ENCODE measurements at regions of chr14 and their contacts with region 1.

Region 1: DNA sequence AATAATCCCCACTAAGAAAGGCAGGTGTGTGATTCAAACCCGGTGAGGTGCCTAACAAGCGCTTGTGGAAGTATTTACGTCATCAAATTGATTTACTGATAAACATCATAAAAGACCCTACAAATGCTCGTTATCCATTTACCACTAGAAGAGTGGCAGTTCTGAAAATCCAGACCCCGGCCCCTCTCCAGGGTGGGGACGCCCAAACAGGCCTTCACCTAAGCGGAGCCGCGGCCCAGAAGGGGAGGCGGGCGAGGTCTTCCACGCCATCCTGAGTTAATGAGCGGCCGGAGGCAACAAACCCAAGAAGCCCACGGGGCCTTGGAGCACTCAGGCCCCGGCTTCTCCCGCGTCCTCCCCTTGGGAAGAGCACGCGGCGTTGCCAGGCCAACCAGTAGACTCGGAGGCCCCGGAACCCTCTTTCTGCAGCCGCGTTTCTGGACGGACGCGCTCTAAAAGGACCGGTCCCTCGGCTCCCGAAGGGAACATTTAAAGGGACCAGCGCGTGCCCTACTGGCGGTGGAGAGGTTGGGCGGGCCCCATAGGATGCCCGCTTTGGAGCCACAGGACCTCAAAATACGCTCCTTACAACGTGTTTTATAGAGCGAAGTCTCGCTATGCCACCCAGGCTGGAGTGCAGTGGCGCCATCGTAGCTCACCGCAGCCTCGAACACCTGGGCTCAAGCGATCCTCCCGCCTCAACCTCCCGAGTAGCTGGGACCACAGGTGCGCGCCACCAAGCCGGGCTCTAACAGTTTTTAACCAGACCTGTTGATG is 3.5 kb downstream of the PTPN21 start:
- DNase-seq: peak; percentile 77 to 93 (median 83)
- ATAC-seq: peak; percentile 82 to 92 (median 86)
- H3K4me3 ChIP-seq: peak overlapping the region; percentile 44 to 72 (median 51)
- H3K27ac ChIP-seq: peak overlapping the region; percentile 11 to 71 (median 49)
- H3K4me1 ChIP-seq: peaks cover 8 to 33% (median 16%) of the 10 kb centered on the region in 3 donors
- H3K27me3 ChIP-seq: no peaks in the 10 kb centered on the region
- CTCF ChIP-seq: peak in 2 of 4 donors; percentile 11 to 14

Region 2: GRCh38 chr14:88143810-88144209 is 407.5 kb before region 1 on chr14:
- intact Hi-C with region 1: no loop called
- DNase-seq: no peak
- ATAC-seq: no peak
- H3K4me3 ChIP-seq: no peak overlapping the region
- H3K27ac ChIP-seq: no peak overlapping the region
- H3K4me1 ChIP-seq: no peaks in the 10 kb centered on the region
- H3K27me3 ChIP-seq: no peaks in the 10 kb centered on the region
- CTCF ChIP-seq: no peak

Region 3: GRCh38 chr14:88189417-88190191 is 361.7 kb before region 1 on chr14:
- intact Hi-C with region 1: loop called in 1 of 3 experiments (anchors 10 kb)
- DNase-seq: peak in 4 of 6 donors; percentile 66 to 93 (median 88)
- ATAC-seq: peak; percentile 97 to 99 (median 98)
- H3K4me3 ChIP-seq: peak overlapping the region in 3 of 4 donors; percentile 15 to 45 (median 32)
- H3K27ac ChIP-seq: peak overlapping the region in 3 of 4 donors; percentile 48 to 68 (median 60)
- H3K4me1 ChIP-seq: peaks cover 5 to 12% (median 11%) of the 10 kb centered on the region in 3 donors
- H3K27me3 ChIP-seq: no peaks in the 10 kb centered on the region
- CTCF ChIP-seq: peak; percentile 16 to 48 (median 34)

Region 4: DNA sequence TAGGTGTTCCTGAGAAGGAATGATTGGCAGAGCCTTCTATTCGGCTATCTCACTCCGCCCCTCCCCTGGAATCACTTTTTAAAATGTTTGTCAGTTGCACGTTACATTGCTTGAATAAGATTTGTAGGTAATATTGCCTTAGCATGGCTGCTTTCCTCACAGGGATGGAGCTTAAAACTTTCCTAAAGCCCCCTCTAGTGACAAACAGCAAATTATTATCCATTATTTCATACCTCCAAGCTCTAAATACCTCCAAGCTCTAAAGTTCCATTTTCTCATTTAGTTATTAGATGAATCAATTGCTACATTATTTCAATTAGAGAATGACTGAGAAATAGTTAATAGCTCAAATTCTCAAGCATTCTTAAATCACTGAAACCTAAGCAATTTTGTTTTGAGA is 170.9 kb before region 1 on chr14:
- intact Hi-C with region 1: no loop called
- DNase-seq: no peak
- ATAC-seq: peak in 2 of 4 donors; percentile 13 to 51
- H3K4me3 ChIP-seq: no peak overlapping the region
- H3K27ac ChIP-seq: no peak overlapping the region
- H3K4me1 ChIP-seq: no peaks in the 10 kb centered on the region
- H3K27me3 ChIP-seq: no peaks in the 10 kb centered on the region
- CTCF ChIP-seq: no peak

Region 5: GRCh38 chr14:88492272-88493089 is 58.8 kb before region 1 on chr14:
- intact Hi-C with region 1: loop called in 2 of 3 experiments (anchors 5 to 10 kb)
- DNase-seq: peak in 4 of 6 donors; percentile 50 to 82 (median 66)
- ATAC-seq: peak; percentile 90 to 99 (median 98)
- H3K4me3 ChIP-seq: no peak overlapping the region
- H3K27ac ChIP-seq: no peak overlapping the region
- H3K4me1 ChIP-seq: no peaks in the 10 kb centered on the region
- H3K27me3 ChIP-seq: no peaks in the 10 kb centered on the region
- CTCF ChIP-seq: peak; percentile 83 to 97 (median 92)

Region 6: DNA sequence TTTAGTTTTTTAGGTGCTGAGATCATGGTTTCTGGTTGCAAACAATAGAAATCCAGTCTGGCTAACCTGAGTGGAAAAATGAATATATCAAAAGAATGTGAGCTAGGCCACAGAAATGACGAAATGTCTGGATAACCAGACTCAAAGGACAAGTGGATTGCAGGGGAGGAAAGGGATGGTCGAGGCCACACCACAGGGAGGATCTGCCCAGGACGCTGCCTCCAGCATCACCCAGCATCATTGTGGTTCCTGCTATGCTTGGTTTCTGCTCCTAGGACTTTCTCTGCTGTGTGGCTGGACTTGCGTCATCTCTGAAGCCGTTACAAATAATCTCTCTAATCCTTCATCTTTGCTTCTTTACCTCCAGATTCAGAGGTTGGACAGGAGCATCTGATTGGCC is 353.6 kb after region 1 on chr14:
- intact Hi-C with region 1: no loop called
- DNase-seq: no peak
- ATAC-seq: no peak
- H3K4me3 ChIP-seq: no peak overlapping the region
- H3K27ac ChIP-seq: no peak overlapping the region
- H3K4me1 ChIP-seq: no peaks in the 10 kb centered on the region
- H3K27me3 ChIP-seq: no peaks in the 10 kb centered on the region
- CTCF ChIP-seq: no peak

Measured in pancreas (tissue), 10 donors.